Transverse colon (tissue), 4 donors: ENCODE measurements at regions of chr12 and their contacts with region 1.

Region 1: DNA sequence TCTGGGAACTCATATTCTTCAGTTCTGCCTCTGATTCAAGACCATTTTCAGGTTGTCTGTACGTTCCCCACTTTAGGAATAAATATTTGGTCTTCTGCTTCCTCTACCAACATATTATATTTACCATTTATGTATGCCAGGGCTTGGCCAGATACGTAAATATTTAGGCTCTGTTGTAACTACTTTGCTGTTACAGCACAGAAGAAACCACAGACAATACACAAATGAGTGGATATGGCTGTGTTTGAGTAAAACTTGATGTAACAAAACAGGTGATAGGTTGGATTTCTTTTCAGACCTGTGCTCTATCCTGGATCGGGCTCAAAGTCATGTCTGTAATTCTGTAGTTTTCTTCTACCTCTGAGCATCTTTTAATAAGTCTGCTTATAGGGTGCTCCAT is 37.5 kb downstream of the RAP1B start:
- DNase-seq: no peak
- H3K4me3 ChIP-seq: no peak overlapping the region
- H3K27ac ChIP-seq: peak overlapping the region in 1 of 4 donors; percentile 5
- H3K4me1 ChIP-seq: peaks cover 5 to 26% (median 7%) of the 10 kb centered on the region in 4 donors
- H3K27me3 ChIP-seq: no peaks in the 10 kb centered on the region
- CTCF ChIP-seq: no peak
- EP300 ChIP-seq: no peak
- POLR2A ChIP-seq: no peak

Region 2: GRCh38 chr12:67315661-67316060 is 1332.5 kb before region 1 on chr12:
- in situ Hi-C with region 1: no loop called
- intact Hi-C with region 1: loop called (anchors 10 kb)
- DNase-seq: no peak
- H3K4me3 ChIP-seq: no peak overlapping the region
- H3K27ac ChIP-seq: no peak overlapping the region
- H3K4me1 ChIP-seq: no peaks in the 10 kb centered on the region
- H3K27me3 ChIP-seq: no peaks in the 10 kb centered on the region
- CTCF ChIP-seq: no peak
- EP300 ChIP-seq: no peak
- POLR2A ChIP-seq: no peak